Spleen (tissue), 13 donors: ENCODE measurements at regions of chr15 and their contacts with region 1.

Region 1: DNA sequence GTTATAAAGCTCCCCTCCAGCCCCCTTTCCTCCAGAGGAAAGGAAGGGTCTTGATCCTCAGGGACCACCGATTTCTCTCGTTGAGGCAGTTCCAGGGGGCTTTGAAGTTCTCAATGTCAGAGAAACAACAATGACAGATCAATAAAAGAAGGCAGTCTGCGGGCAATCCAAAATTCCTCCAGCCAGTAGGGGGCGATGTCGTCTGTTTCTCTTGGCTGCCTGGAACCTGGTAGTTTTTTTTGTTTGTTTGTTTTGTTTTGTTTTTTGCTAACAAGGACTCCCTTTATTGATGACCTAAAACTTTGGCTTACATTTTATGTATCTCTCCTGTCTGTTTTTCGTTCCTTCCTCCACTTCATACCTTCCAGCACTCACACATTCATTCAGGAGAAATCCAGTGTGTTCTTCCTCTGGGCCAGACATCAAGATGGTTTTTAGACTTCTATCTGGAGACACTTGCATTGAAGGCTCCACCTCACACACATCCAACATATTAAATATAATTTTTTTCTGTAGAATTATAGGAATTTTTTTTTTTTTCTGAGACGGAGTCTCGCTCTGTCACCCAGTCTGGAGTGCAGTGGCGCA is 276.6 kb downstream of the RPLP1 start:
- DNase-seq: peak; percentile 83
- H3K4me3 ChIP-seq: no peak overlapping the region
- H3K27ac ChIP-seq: peak overlapping the region in 2 of 8 donors; percentile 32 to 59
- H3K4me1 ChIP-seq: peaks cover 0 to 50% (median 34%) of the 10 kb centered on the region in 6 donors
- H3K27me3 ChIP-seq: peaks cover 0 to 7% (median 0%) of the 10 kb centered on the region in 7 donors
- CTCF ChIP-seq: peak; percentile 67 to 90 (median 84)
- POLR2A ChIP-seq: no peak

Region 2: DNA sequence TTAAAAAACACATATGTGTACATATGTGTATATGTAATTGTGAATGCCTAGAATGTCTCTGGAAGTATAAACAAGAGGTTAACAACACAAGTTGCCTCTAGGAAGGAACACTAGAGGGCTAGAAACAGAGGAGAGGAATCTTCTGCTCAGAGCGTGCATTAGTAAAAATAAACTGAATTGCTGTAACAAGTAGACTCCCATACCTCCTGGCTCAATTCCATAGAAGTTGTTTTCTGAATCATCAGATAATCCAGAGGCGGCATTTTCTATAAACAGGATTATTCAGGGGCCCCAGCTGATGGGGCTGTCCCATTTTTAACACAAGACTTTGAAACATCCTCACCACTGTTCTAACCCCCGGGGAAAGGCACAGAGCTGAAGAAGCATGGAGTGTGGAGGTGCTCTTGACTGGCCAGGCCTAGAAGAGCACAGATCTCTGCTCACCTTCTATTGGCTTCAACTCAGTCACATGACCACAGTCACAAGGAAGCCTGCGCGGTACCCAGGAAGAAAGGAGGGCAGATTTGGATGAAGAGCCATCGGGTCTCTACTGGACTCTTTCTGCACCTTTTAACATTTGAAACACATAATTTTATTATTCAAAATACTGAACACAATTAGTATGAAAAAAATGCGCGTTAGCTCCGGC is 222.8 kb after region 1 on chr15:
- intact Hi-C with region 1: no loop called
- DNase-seq: no peak
- H3K4me3 ChIP-seq: no peak overlapping the region
- H3K27ac ChIP-seq: no peak overlapping the region
- H3K4me1 ChIP-seq: peaks cover 0 to 10% (median 0%) of the 10 kb centered on the region in 6 donors
- H3K27me3 ChIP-seq: peaks cover 0 to 7% (median 0%) of the 10 kb centered on the region in 7 donors
- CTCF ChIP-seq: no peak
- POLR2A ChIP-seq: no peak

Region 3: GRCh38 chr15:70097337-70098169 is 368.3 kb after region 1 on chr15 and contains the start of gene TLE3:
- intact Hi-C with region 1: loop called (anchors 10 kb)
- DNase-seq: peak; percentile 99
- H3K4me3 ChIP-seq: peak within 1 kb of the TSS; percentile 67 to 96 (median 81)
- H3K27ac ChIP-seq: peak within 1 kb of the TSS; percentile 91 to 99 (median 97)
- H3K4me1 ChIP-seq: peaks cover 43 to 93% (median 72%) of the 10 kb centered on the region in 6 donors
- H3K27me3 ChIP-seq: peaks cover 0 to 25% (median 0%) of the 10 kb centered on the region in 7 donors
- CTCF ChIP-seq: peak in 9 of 11 experiments; percentile 45 to 72 (median 53)
- POLR2A ChIP-seq: peak; percentile 61 to 84 (median 72)
- total RNA-seq, gene TLE3: 81.7 to 141 (median 121) TPM